ENCODE measurements at regions of chrX and their contacts with region 1.

Region 1: DNA sequence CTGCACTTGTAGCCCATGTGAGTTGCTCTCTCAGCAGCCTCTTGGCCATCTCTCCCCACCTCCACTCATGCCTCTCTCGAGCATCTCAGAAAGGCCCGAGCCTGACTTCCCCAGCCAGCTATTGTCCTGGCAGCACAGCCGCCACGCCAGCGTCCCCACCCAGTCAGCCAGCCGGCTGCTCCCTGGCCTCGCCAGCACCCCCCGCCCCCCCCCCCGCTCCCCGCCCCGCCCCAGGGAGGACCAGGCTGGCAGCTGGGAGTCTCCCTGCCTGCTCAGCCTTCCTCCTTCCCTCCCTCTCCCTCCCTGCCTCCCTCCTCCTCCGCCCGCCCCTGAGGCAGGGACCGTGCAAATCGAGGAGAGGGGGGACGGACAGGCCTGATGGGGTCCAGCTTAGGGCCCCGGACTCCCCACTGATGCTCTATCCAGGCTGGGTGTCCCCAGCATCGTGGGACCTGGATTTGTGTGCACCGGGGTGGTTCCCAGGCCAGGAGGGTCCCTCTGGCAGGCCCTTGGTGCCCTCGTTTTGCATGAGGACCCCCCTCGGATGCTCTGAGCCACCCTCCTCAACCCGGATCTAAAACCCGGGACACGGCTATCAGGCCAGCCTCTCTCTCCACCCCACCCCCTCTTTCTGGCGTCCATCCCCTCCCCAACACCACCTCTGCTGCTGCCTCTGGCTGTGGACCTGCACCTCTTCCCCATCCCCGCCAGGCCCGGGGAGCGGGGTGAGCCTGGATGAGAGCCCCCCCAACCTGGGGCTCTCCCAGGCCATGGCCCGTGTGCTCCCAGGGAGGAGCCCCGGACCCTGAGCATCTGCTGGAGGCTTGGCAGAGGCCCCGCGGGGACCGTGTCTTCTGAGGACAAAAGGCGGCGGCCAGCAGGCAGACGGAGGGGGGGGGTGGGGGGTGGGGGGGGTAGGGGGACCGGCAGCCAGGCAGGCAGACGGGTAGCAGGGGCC is at the start of gene GPR173:
- DNase-seq: peak; percentile 76
- H3K4me3 ChIP-seq: peak within 1 kb of the TSS; percentile 39 to 53 (median 50)
- H3K27ac ChIP-seq: peak within 1 kb of the TSS; percentile 31 to 63 (median 41)
- H3K4me1 ChIP-seq: peaks cover 0 to 17% (median 7%) of the 10 kb centered on the region in 4 donors
- H3K27me3 ChIP-seq: no peaks in the 10 kb centered on the region
- CTCF ChIP-seq: no peak
- EP300 ChIP-seq: no peak
- POLR2A ChIP-seq: no peak
- total RNA-seq, gene GPR173: 1.3 to 5.6 (median 2.1) TPM

Region 2: DNA sequence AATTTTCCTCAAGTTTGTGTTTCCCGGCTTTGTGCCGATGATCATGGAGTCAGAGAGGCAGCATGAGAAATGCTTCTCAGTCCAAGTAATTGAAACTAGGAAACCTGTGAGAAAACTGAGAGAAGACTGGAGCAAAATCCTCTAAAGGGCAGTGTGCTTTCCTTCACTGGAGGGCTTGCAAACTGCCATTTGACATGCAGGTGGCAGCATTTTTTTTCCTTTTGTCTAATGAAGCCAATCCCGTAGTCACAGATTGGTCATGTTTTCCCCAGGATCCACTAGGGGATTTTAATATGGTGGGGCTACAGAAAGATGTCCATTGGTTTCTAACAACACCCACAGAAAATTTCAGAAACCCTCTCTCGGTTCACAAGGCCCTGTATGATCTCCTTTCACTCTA is 1833.2 kb before region 1 on chrX:
- intact Hi-C with region 1: no loop called
- DNase-seq: no peak
- H3K4me3 ChIP-seq: no peak overlapping the region
- H3K27ac ChIP-seq: no peak overlapping the region
- H3K4me1 ChIP-seq: no peaks in the 10 kb centered on the region
- H3K27me3 ChIP-seq: no peaks in the 10 kb centered on the region
- CTCF ChIP-seq: no peak
- EP300 ChIP-seq: no peak
- POLR2A ChIP-seq: no peak

Region 3: DNA sequence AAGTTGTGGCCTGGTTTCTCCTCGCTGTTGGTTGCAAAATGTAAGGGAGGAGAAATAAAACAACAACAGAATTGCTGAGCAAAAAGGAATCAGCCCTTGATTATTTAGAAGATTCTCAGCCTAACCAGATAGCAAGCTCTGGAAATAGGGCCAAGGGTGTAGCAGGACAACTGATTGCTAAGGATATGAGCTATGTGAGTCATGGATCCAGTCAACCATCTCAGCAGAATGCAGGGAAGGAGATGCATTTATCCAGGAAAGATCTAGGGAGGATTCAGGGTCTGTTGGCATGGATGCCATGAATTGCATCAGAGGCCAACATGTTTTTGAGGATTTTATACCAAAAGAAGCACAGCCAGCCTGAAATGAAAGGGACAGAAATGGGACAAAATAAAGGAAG is 178.4 kb before region 1 on chrX:
- intact Hi-C with region 1: no loop called
- DNase-seq: no peak
- H3K4me3 ChIP-seq: no peak overlapping the region
- H3K27ac ChIP-seq: no peak overlapping the region
- H3K4me1 ChIP-seq: no peaks in the 10 kb centered on the region
- H3K27me3 ChIP-seq: no peaks in the 10 kb centered on the region
- CTCF ChIP-seq: no peak
- EP300 ChIP-seq: no peak
- POLR2A ChIP-seq: no peak

Region 4: DNA sequence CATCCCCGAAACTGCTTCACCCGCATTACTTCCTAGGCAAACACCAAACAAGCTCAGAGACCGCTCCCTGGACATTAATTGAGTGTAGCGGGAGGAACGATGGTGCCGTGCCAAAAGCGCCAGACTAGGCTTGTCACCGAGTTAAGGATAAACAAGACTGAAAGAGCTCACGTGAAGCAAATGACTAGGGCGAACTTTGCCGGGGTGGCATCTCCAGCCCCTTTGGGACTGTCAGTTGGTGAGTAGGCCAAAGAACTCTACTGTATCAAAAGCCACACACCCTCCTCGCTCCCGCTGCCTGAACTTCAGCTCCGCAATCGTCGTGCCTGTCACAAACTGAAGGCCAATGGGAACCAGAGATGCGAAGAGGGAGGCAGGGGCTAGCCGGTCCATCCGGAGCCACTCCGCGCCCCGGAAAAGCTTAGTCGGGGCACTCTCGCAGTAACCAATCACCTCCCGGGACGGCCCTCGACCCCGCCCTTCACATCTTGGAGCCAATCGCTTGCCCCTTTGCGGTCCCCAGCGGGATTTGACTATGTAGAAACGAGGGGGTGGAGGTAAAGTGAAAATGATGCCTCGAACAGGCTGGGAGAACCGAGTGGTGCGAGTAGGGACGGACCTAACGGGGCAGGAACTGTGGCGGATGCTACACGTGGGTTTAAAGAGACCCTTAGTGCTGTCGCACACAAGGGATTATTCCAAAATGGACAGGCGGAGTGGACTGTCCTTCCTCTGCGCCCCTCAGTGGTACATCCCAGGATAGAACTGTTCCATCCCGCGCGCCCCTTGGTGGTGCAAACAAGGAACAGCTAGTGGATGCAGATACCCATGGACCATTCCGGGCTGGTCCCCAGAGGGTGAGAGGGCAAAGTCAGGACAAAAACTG is 53.1 kb before region 1 on chrX:
- intact Hi-C with region 1: loop called (anchors 5 kb)
- DNase-seq: peak; percentile 97
- H3K4me3 ChIP-seq: peak overlapping the region; percentile 36 to 58 (median 54)
- H3K27ac ChIP-seq: peak overlapping the region; percentile 81 to 87 (median 82)
- H3K4me1 ChIP-seq: peaks cover 0 to 16% (median 11%) of the 10 kb centered on the region in 4 donors
- H3K27me3 ChIP-seq: peaks cover 0 to 2% (median 0%) of the 10 kb centered on the region in 3 donors
- CTCF ChIP-seq: peak; percentile 59 to 84 (median 76)
- EP300 ChIP-seq: no peak
- POLR2A ChIP-seq: no peak

Region 5: GRCh38 chrX:53018627-53019026 is 29.8 kb before region 1 on chrX:
- intact Hi-C with region 1: no loop called
- DNase-seq: no peak
- H3K4me3 ChIP-seq: no peak overlapping the region
- H3K27ac ChIP-seq: no peak overlapping the region
- H3K4me1 ChIP-seq: no peaks in the 10 kb centered on the region
- H3K27me3 ChIP-seq: peaks cover 0 to 4% (median 0%) of the 10 kb centered on the region in 3 donors
- CTCF ChIP-seq: no peak
- EP300 ChIP-seq: no peak
- POLR2A ChIP-seq: no peak